ENCODE measurements at regions of chr2 and their contacts with region 1.

Region 1: GRCh38 chr2:73920577-73921545 is 5.8 kb upstream of the DGUOK start:
- DNase-seq: peak; percentile 21 to 57
- ATAC-seq: peak; percentile 23 to 60 (median 50)
- H3K4me3 ChIP-seq: no peak overlapping the region
- H3K27ac ChIP-seq: no peak overlapping the region
- H3K4me1 ChIP-seq: no peaks in the 10 kb centered on the region
- H3K27me3 ChIP-seq: peaks cover 0 to 5% (median 4%) of the 10 kb centered on the region in 3 donors
- CTCF ChIP-seq: no peak

Region 2: DNA sequence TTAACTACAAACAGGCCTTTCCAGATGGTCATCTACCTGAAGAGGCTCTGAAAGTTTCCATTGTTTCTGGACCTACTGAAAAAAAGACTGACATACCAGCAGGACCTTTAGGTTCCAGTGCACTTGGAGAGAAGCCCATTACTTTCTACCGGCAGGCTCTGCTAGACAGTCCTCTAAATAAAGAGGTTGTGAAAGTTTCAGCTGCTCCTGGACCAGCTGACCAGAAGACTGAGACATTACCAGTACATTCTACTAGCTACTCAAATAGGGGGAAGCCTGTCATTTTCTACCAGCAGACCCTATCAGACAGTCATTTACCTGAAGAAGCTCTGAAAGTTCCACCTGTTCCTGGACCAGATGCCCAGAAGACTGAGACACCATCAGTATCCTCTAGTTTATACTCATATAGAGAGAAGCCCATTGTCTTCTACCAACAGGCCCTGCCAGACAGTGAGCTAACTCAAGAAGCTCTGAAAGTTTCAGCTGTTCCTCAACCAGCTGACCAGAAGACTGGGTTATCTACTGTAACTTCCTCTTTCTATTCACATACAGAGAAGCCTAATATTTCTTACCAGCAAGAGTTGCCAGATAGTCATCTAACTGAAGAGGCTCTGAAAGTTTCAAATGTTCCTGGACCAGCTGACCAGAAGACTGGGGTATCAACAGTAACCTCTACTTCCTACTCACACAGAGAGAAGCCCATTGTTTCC is 469.4 kb before region 1 on chr2:
- intact Hi-C with region 1: no loop called
- DNase-seq: no peak
- ATAC-seq: no peak
- H3K4me3 ChIP-seq: no peak overlapping the region
- H3K27ac ChIP-seq: no peak overlapping the region
- H3K4me1 ChIP-seq: no peaks in the 10 kb centered on the region
- H3K27me3 ChIP-seq: no peaks in the 10 kb centered on the region
- CTCF ChIP-seq: no peak

Region 3: DNA sequence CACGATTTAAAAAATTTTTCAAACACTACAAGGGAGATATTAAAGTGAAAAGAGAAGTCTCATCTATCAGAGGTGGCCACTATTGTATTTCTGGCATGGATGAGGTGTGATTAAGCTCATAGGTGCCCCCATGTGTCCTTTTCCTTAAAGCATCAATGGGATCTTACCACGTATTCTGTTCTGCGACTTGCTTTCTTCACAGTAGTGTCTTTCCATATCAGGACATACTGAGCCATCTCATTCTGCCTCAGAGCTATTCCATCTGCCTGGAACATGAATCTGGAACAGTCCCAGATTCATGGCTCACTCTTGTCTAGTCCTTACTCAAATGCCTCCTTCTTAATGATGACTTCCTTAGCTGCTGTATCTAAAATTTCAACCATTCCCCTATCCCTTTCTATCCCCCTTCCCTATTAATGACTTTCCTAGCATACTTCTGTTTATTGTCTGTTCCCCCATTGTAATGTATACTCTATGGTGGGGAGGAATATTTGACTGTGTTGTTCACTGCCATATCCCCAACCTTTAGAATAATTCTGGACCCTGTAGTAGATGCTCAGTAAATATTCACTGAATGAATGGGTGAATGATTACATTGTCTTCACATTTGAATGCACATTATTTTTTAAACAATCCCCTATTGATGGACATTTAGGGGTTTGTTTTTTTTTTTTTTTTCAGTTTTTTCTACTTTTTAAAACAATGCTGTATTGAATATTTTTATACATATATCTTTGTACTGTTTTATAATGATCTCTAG is 81.0 kb before region 1 on chr2:
- intact Hi-C with region 1: loop called in 1 of 2 experiments (anchors 5 kb)
- DNase-seq: no peak
- ATAC-seq: peak in 3 of 4 donors; percentile 24 to 59 (median 45)
- H3K4me3 ChIP-seq: no peak overlapping the region
- H3K27ac ChIP-seq: peak overlapping the region; percentile 99
- H3K4me1 ChIP-seq: peaks cover 34% of the 10 kb centered on the region
- H3K27me3 ChIP-seq: no peaks in the 10 kb centered on the region
- CTCF ChIP-seq: no peak

Measured in psoas muscle (tissue), 8 donors.